ENCODE measurements at regions of chr19 and their contacts with region 1.

Region 1: DNA sequence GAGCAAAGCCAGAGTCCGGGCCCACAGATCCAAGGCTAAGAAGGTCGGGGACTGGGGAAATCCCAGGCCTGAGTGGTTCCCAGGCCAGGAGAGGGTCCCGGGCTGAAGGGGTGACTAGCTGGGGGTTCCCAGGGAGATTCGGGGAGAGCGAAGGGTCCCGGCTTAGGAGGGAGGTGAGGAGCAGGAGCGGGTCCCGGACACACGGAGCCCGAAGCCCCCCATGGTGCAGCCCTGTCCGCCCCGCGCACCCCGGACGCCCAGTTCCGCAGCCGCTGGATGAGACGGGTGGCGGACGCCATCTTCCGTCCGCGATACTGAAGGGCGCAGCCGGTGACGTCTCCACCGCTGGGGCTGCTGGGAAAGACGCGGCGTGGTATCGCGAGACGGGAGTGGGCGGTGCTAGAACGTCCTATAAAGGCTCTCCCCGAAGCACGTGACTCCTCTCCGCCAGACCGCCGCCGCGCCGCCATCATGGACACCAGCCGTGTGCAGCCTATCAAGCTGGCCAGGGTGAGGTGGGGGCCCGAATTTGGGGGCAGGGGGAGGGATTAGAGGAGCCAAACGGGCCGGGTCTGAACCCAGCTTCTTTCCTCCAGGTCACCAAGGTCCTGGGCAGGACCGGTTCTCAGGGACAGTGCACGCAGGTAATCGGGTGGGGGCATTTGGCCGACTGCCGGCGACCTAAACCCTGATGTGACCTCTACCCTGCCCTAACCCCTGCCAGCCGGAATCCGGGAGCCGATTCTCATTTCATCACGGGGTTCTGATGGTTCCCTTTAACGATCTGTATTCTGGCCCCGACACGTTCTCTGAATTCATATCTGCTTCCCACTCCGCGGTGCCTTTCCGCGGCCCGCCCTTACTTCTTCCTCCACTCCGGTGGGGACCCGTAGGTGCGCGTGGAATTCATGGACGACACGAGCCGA is at the starts of genes NDUFA7 and RPS28:
- DNase-seq: peak; percentile 62
- H3K4me3 ChIP-seq: peak within 1 kb of the TSS; percentile 99
- CTCF ChIP-seq: peak; percentile 25

Region 2: GRCh38 chr19:8252922-8253589 is 68.3 kb before region 1 on chr19:
- CTCF ChIA-PET with region 1: no interaction called
- POLR2A ChIA-PET with region 1: no interaction called
- DNase-seq: no peak
- H3K4me3 ChIP-seq: no peak overlapping the region
- CTCF ChIP-seq: peak; percentile 92

Region 3: DNA sequence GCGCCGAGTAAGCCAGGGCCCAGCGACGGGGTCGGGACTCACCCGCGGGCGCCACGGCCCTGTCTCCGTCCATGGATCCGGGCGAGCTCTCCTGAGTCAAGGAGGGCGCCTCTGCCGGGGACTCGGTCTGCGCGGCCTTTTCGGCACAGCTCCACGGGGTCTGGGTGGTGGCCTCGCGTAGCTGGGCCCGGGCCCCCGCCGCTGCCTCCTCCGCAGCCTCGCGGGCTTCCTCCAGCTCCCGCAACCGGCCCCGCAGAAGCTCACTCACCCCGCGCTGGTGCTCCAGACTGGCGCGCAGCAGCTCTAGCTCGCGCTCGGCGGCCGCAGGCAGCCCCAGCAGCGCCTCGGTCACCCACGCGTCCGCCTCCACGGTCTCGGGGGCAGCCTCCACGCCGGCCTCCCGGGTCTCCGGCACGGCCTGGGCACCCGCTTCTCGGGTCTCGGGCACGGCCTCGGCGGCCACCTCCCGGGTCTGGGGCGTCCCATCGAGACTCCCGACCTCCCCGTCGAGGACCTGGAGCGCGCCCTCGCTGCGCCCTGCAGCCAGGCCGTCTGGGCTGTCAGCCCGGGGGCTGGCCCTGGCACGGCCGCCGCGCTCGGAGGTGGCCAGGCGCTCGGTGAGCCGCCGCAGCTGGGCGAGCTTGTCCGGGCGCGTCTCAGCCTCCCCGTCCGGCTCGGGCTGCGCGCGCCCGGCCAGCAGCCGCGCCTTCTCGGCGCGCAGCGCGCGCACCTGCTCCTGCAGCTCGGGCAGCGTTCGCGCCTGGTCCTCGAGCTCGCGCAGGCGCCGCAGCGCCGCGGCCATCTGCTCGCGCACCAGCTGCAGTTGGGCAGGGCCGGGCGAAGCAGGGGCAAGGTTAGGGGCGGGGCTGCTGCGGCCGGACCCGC is 13.4 kb after region 1 on chr19:
- CTCF ChIA-PET with region 1: interaction called, 3 read pairs
- POLR2A ChIA-PET with region 1: interaction called, 10 read pairs
- DNase-seq: no peak
- H3K4me3 ChIP-seq: no peak overlapping the region
- CTCF ChIP-seq: no peak

Region 4: DNA sequence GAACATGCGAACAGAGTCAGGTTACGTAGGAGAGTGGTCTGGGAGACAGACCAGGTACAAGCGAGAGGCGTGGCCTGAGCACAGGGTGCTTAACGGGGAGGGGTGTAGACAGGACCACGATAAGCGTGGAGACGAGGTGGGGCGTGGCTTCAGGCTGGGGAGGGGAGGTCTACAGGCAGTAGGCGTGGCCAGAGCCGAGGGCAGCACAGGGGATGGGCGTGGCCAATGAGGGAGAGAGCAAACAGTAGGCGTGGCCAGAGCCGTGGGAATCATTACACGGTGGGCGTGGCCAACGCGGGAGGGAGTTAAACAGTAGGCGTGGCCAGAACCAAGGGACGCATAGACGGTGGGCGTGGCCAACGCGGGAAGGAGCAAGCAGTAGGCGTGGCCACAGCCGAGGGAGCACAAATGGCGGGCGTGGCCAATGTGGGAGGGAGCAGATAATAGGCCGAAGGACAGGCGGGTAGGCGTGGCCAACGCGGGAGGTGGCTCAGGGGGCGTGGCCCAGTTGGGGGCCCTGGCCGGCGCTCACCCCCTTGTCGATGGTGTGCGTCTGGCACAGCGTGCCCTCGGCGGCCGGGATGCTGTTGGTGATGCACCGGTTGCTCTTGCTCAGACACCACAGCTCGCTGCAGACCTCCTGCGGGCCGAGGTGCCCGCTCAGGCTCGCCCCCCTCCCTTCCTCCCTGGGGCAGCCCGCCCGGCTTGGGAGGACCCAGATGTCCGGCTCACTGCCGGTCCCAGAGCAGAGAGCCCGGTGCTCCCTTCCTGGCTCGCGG is 271.1 kb after region 1 on chr19:
- CTCF ChIA-PET with region 1: no interaction called
- POLR2A ChIA-PET with region 1: no interaction called
- DNase-seq: peak; percentile 61
- H3K4me3 ChIP-seq: peak overlapping the region; percentile 51
- CTCF ChIP-seq: no peak

Measured in AG04449 (cell line).